ENCODE measurements at regions of chr1 and their contacts with region 1.

Region 1: DNA sequence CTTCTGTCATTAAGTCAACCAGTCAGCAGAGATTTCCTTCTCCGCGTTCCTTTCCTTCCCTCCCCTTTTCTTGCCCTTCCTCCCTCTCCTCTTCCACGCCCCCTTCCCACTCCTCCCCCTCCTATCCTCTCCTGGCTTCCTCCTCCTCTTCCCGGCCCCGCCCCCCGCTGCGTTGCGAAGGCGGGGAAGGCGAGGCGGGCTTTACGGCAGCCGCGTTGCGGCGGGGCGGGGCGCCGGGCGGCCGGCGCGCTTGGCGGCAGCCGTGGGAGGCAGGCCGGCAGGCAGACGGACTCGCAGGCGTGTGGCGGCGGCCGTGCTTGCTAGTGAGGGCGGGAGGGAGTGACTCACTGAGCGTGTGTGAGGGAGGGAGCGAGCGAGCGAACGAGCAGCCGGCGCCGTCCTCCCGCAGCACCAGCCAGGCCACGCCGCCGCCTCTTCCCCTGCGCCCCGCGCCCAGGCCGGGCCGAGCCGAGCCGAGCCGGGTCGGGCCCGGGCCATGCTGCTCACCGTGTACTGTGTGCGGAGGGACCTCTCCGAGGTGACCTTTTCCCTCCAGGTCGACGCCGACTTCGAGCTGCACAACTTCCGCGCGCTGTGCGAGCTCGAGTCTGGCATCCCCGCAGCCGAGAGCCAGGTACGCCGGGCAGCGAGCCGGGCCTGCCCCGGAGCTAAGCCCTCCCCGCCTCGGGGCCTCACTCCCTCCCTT is at the start of gene DDI2:
- DNase-seq: peak; percentile 93
- H3K4me3 Mint-ChIP-seq: peak within 1 kb of the TSS; percentile 85
- H3K27ac Mint-ChIP-seq: peak within 1 kb of the TSS; percentile 95
- H3K4me1 Mint-ChIP-seq: peaks cover 30% of the 10 kb centered on the region
- H3K27me3 Mint-ChIP-seq: no peaks in the 10 kb centered on the region
- total RNA-seq, gene DDI2: 46.4 and 47.7 TPM in 2 replicates

Region 2: GRCh38 chr1:15409388-15410222 is 207.7 kb before region 1 on chr1 and contains the start of gene EFHD2:
- intact Hi-C with region 1: loop called (anchors 10 kb)
- DNase-seq: peak; percentile 80
- H3K4me3 Mint-ChIP-seq: peak within 1 kb of the TSS; percentile 94
- H3K27ac Mint-ChIP-seq: peak within 1 kb of the TSS; percentile 89
- H3K4me1 Mint-ChIP-seq: peaks cover 30% of the 10 kb centered on the region
- H3K27me3 Mint-ChIP-seq: peaks cover 27% of the 10 kb centered on the region
- total RNA-seq, gene EFHD2: 82.4 and 85.2 TPM in 2 replicates

Region 3: DNA sequence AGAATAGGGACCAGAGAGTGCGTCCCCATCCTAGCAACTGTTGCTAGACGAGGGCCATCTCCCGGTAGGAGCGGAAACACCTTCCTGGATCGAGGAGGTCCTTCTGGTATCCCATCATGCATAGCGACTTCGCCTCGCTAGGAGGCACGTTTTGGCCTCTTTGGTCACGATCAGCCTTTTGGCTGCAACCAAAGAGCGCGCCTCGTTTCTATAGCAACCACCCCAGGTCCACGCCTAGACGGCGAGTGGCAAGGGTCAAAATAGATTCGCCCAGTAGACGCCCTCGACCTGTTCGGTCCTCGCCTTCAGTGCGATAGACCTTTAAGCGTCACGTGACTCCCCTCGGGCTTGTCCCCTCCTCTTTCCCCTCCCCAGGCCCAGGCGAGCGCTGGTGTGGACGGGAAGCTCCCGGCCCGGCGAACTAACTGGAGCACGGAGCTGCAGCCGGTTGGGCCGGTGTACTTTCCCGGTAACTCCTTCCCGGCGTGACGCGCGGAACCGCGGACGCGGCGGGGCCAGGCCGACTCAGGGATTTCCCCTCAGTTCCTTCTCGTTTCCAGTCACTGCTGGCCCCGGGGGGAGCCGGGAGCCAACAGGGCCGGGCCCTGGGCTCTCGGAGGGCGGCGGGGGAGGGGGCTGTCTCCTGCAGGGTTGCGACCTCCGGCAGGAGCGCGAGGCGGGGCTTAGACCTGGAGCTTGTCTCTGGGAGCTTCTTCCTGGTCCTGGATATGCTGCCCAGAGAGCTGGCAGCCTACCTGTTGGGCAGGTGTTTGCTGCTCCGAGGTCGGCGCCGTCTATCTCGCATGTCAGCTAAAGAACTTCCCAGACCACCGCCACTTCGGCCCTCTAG is 90.6 kb before region 1 on chr1 and contains the start of gene DNAJC16:
- intact Hi-C with region 1: loop called (anchors 1 kb)
- DNase-seq: peak; percentile 99
- H3K4me3 Mint-ChIP-seq: peak within 1 kb of the TSS; percentile 87
- H3K27ac Mint-ChIP-seq: peak within 1 kb of the TSS; percentile 98
- H3K4me1 Mint-ChIP-seq: peaks cover 44% of the 10 kb centered on the region
- H3K27me3 Mint-ChIP-seq: no peaks in the 10 kb centered on the region
- total RNA-seq, gene DNAJC16: 10.9 and 18.7 TPM in 2 replicates

Region 4: DNA sequence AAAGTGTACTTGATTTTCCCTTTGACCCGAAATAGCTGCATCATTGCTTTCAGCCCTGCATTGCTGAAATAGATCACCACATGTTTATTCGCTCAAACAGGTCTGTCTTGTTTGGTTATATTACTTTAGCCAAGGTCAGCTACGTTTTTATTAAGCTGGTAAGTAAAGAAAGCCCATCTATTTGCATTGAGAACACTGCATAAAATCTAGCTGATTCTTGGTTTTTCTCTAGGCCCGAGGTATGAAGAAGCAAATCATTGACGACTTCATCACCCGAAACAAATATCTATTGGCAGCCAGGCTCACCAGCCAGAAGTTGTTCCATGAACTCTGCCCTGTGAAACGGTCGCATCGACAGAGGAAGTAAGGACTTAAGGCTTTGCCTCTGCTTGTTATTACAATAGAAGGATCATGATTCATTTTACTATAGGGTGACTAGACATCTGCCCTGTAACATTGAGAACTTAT is 58.0 kb before region 1 on chr1:
- intact Hi-C with region 1: no loop called
- DNase-seq: no peak
- H3K4me3 Mint-ChIP-seq: no peak overlapping the region
- H3K27ac Mint-ChIP-seq: no peak overlapping the region
- H3K4me1 Mint-ChIP-seq: peaks cover 3% of the 10 kb centered on the region
- H3K27me3 Mint-ChIP-seq: no peaks in the 10 kb centered on the region

Region 5: DNA sequence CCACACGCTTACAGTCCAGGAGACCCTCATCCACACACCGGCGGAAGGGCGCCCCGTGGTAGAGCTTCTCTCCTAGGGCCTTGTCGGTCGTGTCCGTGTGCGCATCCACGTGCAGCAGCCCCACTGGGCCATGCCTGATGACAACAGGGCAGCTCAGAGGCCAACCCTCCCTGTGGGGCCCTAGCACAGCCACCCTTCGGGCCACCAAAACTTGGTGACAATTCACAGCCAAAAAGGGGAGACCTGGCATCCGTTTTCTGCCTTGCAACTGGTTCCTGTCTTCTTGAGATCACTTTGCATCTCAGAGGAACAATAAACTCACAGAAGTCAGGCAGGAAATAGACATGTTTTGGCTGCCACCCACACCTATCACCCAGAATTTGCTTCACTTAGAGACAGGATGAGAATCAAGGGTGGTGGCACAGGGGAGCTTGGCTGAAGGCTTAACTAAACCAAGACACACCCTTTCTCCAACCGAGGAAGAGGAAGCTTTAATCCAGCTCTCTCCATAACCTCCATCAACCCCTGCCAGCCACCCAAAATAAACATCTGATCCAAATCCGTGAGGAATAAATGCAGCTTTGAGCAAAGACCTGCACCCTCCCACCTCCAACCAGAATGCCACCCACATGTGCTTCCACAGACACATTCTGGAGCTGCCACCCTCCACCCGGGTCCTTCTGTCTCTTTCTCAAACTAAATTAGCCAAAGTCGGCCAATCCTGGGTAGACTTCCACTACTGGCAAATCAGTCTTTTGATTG is 38.2 kb before region 1 on chr1:
- intact Hi-C with region 1: no loop called
- DNase-seq: peak; percentile 23
- H3K4me3 Mint-ChIP-seq: peak overlapping the region; percentile 56
- H3K27ac Mint-ChIP-seq: peak overlapping the region; percentile 93
- H3K4me1 Mint-ChIP-seq: peaks cover 30% of the 10 kb centered on the region
- H3K27me3 Mint-ChIP-seq: no peaks in the 10 kb centered on the region

Region 6: DNA sequence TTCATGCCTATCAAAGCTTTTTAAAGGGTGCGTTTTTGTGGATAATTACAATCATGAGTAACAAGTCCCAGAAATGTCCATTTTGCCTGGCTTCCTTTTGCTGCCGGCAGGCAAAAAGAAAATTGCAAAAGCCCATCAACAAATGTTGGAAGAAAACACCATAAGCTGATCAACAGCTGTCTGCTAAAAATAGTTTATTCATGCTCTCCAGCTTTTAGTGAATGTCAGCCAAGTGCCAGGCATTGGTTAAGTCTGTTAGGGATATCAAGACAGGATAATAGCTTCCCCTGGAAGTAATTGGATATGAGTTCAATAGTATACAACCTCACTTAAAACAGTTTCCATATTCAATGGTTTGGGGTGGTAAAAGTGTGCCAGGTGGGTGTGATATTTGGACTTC is 18.9 kb before region 1 on chr1:
- intact Hi-C with region 1: no loop called
- DNase-seq: no peak
- H3K4me3 Mint-ChIP-seq: no peak overlapping the region
- H3K27ac Mint-ChIP-seq: no peak overlapping the region
- H3K4me1 Mint-ChIP-seq: peaks cover 3% of the 10 kb centered on the region
- H3K27me3 Mint-ChIP-seq: peaks cover 4% of the 10 kb centered on the region

Region 7: GRCh38 chr1:15684468-15685291 is 67.4 kb after region 1 on chr1:
- intact Hi-C with region 1: loop called (anchors 5 kb)
- DNase-seq: peak; percentile 26
- H3K4me3 Mint-ChIP-seq: peak overlapping the region; percentile 83
- H3K27ac Mint-ChIP-seq: peak overlapping the region; percentile 73
- H3K4me1 Mint-ChIP-seq: peaks cover 22% of the 10 kb centered on the region
- H3K27me3 Mint-ChIP-seq: no peaks in the 10 kb centered on the region

Region 8: GRCh38 chr1:15975805-15976680 is 358.7 kb after region 1 on chr1 and contains the start of gene ZBTB17:
- intact Hi-C with region 1: loop called (anchors 10 kb)
- DNase-seq: peak; percentile 92
- H3K4me3 Mint-ChIP-seq: peak within 1 kb of the TSS; percentile 84
- H3K27ac Mint-ChIP-seq: peak within 1 kb of the TSS; percentile 92
- H3K4me1 Mint-ChIP-seq: peaks cover 34% of the 10 kb centered on the region
- H3K27me3 Mint-ChIP-seq: no peaks in the 10 kb centered on the region
- total RNA-seq, gene ZBTB17: 65.7 and 67.8 TPM in 2 replicates

Measured in activated T-helper 2 cell treated with anti-CD3 and anti-CD28 coated beads, Interferon-gamma antibody, Interleukin-2, Interleukin-4, amounts not matched to agents 10 μg/mL and 5 μg/mL and 100 μg/mL, durations not matched to agents 14 hours and 24 hours and 36 hours (primary cell).